A673 (cell line): ENCODE measurements at regions of chr20 and their contacts with region 1.

Region 1: GRCh38 chr20:37319235-37319671 is 26.7 kb upstream of the SRC start:
- DNase-seq: no peak
- H3K4me3 ChIP-seq: no peak overlapping the region
- H3K27ac ChIP-seq: no peak overlapping the region
- H3K4me1 ChIP-seq: no peaks in the 10 kb centered on the region
- H3K27me3 ChIP-seq: no peaks in the 10 kb centered on the region
- CTCF ChIP-seq: no peak

Region 2: DNA sequence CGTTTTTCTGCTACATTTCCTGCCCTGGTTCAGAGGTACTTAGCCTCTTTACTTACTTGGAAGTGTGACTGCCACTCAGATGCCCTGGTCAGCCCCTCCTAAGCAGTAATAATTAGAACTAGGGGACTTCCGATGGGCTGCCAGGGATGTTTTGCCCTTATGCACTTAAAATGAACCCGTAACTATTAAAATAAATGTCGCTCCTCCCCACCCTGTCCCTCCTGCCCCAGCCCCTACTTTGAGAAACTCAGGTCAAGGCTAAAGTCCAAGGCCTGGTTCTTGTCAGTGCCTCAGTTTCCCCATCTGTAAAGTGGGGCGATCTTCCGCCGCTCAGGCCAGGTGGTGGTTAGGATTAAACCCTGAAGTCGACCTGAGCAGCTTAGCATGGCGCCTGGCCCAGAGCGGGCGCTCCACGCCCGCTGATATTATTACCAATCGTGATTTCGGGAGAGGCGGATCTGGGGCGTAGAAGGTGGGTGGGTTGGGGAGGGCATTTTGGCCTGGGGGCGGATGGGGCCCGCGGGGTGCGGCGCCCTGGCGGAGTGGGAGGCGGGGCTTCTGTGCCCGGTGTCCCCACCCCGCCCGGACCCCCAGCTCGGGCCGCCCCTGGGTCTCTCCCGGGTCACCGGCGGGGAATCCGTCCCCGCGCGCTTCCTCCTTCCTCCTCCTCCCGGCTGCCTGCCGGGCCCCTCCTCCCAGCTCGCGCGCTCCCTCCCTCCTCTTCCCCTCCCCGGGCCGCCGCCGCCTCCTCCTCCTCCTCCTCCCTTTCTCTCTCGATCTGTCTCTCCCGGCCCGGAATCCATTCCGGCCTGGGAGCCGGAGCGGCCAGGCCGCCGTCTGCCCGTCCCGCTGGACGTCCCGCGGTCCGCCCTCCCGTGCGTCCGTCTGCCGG is 26.3 kb after region 1 on chr20 and contains the start of gene SRC:
- CTCF ChIA-PET with region 1: no interaction called
- POLR2A ChIA-PET with region 1: no interaction called
- intact Hi-C with region 1: no loop called
- DNase-seq: peak; percentile 68
- H3K4me3 ChIP-seq: peak within 1 kb of the TSS; percentile 58
- H3K27ac ChIP-seq: peak within 1 kb of the TSS; percentile 63
- H3K4me1 ChIP-seq: no peaks in the 10 kb centered on the region
- H3K27me3 ChIP-seq: no peaks in the 10 kb centered on the region
- CTCF ChIP-seq: no peak
- total RNA-seq, gene SRC: 23.3 and 29.6 TPM in 2 replicates

Region 3: GRCh38 chr20:37406010-37406998 is 87.1 kb after region 1 on chr20:
- CTCF ChIA-PET with region 1: interaction called, 10 read pairs
- POLR2A ChIA-PET with region 1: no interaction called
- intact Hi-C with region 1: no loop called
- DNase-seq: peak; percentile 66
- H3K4me3 ChIP-seq: peak overlapping the region; percentile 30
- H3K27ac ChIP-seq: no peak overlapping the region
- H3K4me1 ChIP-seq: peaks cover 3% of the 10 kb centered on the region
- H3K27me3 ChIP-seq: no peaks in the 10 kb centered on the region
- CTCF ChIP-seq: no peak

Region 4: GRCh38 chr20:37808233-37809070 is 489.2 kb after region 1 on chr20:
- CTCF ChIA-PET with region 1: no interaction called
- POLR2A ChIA-PET with region 1: no interaction called
- intact Hi-C with region 1: no loop called
- DNase-seq: no peak
- H3K4me3 ChIP-seq: no peak overlapping the region
- H3K27ac ChIP-seq: no peak overlapping the region
- H3K4me1 ChIP-seq: no peaks in the 10 kb centered on the region
- H3K27me3 ChIP-seq: no peaks in the 10 kb centered on the region
- CTCF ChIP-seq: no peak